Activated CD4-positive, alpha-beta T cell treated with anti-CD3 and anti-CD28 coated beads, Interleukin-2, amount 10 ng/mL, durations not matched to agents 7 days and 5 days (primary cell): ENCODE measurements at regions of chr17 and their contacts with region 1.

Region 1: DNA sequence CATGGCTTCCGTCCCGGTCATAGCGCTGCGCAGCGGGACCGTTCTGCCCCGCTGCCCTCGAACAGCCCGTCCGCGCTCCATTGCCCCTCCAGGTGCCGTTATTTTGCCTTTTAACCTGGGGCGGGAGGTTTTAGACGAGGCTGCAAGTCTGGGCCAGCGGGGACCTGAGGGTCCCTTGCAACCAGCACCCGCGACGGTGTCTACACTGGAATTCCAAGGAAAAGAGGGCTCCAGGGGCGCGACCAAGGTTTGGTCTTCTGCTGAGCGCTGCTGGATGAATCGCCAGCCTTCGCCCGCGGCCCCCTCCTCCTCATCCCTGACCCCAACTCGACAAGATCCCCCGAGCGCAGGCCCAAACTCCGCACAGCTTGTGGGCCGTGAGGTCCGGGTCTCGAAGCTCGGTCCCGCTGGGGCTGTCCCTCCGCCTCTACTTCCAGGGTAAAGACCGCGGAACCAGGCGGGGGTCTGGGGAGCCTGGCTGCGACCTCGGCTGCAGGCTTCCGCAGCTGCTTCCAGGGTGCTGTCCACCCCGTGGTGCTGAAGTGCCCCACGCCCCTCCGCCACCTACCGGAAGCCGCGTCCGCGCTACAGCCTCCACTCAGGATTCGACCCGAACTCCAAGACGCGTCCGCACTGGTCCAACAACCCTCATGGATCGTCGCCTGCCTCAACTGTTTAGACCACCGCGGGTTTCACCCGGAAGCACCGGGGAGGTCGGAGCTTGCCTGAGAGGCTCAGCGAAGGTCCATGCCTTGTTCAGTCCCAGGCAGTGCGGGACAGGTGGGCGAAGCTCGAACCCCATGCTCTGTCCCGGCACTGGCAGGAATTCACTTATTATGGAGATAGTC is 10.1 kb upstream of the CA4 start:
- DNase-seq: peak; percentile 75
- H3K4me3 Mint-ChIP-seq: no peak overlapping the region
- H3K27ac Mint-ChIP-seq: no peak overlapping the region
- H3K4me1 Mint-ChIP-seq: peaks cover 36% of the 10 kb centered on the region
- H3K27me3 Mint-ChIP-seq: peaks cover 73% of the 10 kb centered on the region

Region 2: DNA sequence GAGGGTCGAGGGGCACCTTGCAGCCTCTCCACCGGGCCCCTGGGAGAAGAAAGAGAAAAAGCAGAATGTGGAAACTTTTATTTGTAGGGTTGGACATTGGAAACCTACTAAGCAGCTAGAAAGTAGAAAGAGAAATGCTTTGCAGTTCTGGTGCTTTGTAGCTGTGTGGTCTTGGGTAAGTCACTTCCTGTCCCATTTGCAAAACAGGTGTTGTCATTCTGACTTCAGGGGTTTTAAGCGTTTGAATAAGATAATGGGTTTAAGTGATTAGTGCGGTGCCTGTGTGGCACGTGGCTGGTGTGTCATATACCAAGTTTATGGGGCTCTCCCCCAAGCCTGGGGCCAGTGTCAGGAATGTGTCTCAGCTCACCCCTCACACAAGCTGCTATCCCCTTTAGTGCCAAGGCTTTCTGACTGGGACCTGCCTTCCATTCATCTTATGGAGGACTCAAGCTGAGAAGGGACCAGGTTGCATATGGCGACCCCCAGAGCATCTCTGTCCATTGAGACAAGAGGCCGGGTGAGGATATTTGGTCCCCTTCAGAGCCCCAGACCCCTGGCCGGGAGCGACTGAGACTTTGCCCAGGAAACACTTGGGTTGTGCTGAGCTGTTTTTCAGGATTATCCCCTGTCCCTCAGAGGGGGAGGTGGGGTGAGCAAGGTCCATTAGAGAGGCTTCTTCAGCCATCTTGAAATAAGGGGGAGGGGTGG is 11.8 kb after region 1 on chr17:
- CTCF ChIA-PET with region 1: interaction called, 12 read pairs
- POLR2A ChIA-PET with region 1: no interaction called
- DNase-seq: peak; percentile 28
- H3K4me3 Mint-ChIP-seq: no peak overlapping the region
- H3K27ac Mint-ChIP-seq: no peak overlapping the region
- H3K4me1 Mint-ChIP-seq: peaks cover 15% of the 10 kb centered on the region
- H3K27me3 Mint-ChIP-seq: peaks cover 60% of the 10 kb centered on the region

Region 3: DNA sequence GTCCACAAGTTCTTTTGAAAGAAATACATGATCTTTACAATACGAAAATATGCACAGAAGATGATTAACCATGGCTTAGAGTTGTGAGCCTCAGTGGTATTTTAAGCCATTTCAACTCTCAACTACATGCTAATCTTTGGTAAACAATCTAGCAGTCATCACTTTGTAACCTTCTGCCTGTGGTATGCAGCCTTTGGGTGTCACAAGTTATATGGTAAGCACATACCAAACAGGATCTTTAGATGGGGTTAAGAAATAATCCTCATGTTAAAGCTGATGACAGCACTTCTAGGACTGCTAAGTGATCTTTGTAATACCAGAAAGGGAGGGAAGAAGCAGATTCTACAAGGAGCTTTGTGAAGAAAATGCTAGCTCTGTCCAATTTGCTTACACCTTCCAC is 84.4 kb after region 1 on chr17:
- CTCF ChIA-PET with region 1: no interaction called
- POLR2A ChIA-PET with region 1: no interaction called
- DNase-seq: no peak
- H3K4me3 Mint-ChIP-seq: no peak overlapping the region
- H3K27ac Mint-ChIP-seq: no peak overlapping the region
- H3K4me1 Mint-ChIP-seq: no peaks in the 10 kb centered on the region
- H3K27me3 Mint-ChIP-seq: no peaks in the 10 kb centered on the region

Region 4: DNA sequence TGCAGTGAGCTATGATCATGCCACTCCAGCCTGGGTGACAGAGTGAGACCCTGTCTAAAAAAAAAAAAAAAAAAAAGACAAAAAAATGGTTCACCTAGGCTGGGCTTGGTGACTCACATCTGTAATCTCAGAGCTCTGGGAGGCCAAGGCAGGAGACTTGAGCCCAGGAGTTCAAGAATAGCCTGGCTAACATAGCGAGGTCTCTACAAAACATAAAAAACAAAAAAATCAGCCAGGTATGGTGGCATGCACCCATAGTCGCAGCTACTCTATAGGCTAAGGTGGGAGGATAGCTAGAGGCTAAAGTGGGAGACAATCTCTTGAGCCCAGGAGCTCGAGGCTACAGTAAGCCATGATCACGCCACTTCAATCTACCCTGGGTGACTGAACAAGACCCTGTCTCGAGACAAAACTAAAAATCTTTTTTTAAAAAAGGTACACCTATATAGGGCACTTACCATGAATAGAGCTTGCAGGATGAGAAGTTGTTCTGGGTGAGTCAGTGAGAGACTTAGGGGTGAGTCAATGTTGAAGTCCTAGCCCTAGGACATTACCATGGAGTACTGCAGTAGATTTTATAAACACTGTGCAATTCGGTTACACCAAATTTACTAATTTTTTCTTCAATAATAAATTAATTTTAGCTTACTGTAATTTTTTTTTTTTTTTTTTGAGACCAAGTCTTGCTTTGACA is 233.3 kb after region 1 on chr17:
- CTCF ChIA-PET with region 1: interaction called, 10 read pairs
- POLR2A ChIA-PET with region 1: no interaction called
- DNase-seq: no peak
- H3K4me3 Mint-ChIP-seq: no peak overlapping the region
- H3K27ac Mint-ChIP-seq: no peak overlapping the region
- H3K4me1 Mint-ChIP-seq: peaks cover 17% of the 10 kb centered on the region
- H3K27me3 Mint-ChIP-seq: no peaks in the 10 kb centered on the region